ENCODE measurements at regions of chr13 and their contacts with region 1.

Region 1: GRCh38 chr13:59950266-59950665 is 213.5 kb downstream of the DIAPH3 start:
- DNase-seq: no peak
- H3K4me3 ChIP-seq: no peak overlapping the region
- H3K27ac ChIP-seq: no peak overlapping the region
- H3K4me1 ChIP-seq: no peaks in the 10 kb centered on the region
- CTCF ChIP-seq: no peak

Region 2: DNA sequence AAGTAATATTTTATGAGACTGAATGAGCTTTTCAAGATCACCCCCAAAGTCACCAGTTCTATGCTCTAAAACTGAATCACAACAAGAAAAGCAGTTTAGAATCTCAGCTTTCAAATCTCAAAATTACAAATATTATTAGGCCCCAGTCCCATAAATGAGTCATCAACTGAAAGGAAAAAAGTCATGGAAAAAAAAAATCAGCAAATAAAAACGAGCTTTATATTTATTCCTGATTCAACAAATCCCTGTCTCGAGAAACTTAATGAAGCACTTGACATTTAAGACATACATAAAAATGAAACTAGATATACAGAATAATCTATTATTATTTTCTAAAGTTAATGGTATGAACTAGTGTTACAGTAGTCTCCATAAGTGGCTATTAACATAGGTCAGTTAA is 10.4 kb after region 1 on chr13:
- CTCF ChIA-PET with region 1: no interaction called
- POLR2A ChIA-PET with region 1: interaction called, 20 read pairs
- intact Hi-C with region 1: no loop called
- DNase-seq: no peak
- H3K4me3 ChIP-seq: no peak overlapping the region
- H3K27ac ChIP-seq: no peak overlapping the region
- H3K4me1 ChIP-seq: no peaks in the 10 kb centered on the region
- CTCF ChIP-seq: no peak

Measured in OCI-LY7 (cell line).